Activated T-helper 2 cell treated with anti-CD3 and anti-CD28 coated beads, Interferon-gamma antibody, Interleukin-2, Interleukin-4, amounts not matched to agents 10 μg/mL and 5 μg/mL and 100 μg/mL, durations not matched to agents 14 hours and 24 hours and 36 hours (primary cell): ENCODE measurements at regions of chr2 and their contacts with region 1.

Region 1: GRCh38 chr2:32356735-32357644 is at the start of gene BIRC6:
- DNase-seq: peak; percentile 94
- H3K4me3 Mint-ChIP-seq: peak within 1 kb of the TSS; percentile 89
- H3K27ac Mint-ChIP-seq: peak within 1 kb of the TSS; percentile 92
- H3K4me1 Mint-ChIP-seq: peaks cover 34% of the 10 kb centered on the region
- H3K27me3 Mint-ChIP-seq: no peaks in the 10 kb centered on the region
- total RNA-seq, gene BIRC6: 111 and 123 TPM in 2 replicates

Region 2: GRCh38 chr2:32108111-32108510 is 248.9 kb before region 1 on chr2:
- intact Hi-C with region 1: no loop called
- DNase-seq: no peak
- H3K4me3 Mint-ChIP-seq: no peak overlapping the region
- H3K27ac Mint-ChIP-seq: no peak overlapping the region
- H3K4me1 Mint-ChIP-seq: peaks cover 5% of the 10 kb centered on the region
- H3K27me3 Mint-ChIP-seq: no peaks in the 10 kb centered on the region

Region 3: DNA sequence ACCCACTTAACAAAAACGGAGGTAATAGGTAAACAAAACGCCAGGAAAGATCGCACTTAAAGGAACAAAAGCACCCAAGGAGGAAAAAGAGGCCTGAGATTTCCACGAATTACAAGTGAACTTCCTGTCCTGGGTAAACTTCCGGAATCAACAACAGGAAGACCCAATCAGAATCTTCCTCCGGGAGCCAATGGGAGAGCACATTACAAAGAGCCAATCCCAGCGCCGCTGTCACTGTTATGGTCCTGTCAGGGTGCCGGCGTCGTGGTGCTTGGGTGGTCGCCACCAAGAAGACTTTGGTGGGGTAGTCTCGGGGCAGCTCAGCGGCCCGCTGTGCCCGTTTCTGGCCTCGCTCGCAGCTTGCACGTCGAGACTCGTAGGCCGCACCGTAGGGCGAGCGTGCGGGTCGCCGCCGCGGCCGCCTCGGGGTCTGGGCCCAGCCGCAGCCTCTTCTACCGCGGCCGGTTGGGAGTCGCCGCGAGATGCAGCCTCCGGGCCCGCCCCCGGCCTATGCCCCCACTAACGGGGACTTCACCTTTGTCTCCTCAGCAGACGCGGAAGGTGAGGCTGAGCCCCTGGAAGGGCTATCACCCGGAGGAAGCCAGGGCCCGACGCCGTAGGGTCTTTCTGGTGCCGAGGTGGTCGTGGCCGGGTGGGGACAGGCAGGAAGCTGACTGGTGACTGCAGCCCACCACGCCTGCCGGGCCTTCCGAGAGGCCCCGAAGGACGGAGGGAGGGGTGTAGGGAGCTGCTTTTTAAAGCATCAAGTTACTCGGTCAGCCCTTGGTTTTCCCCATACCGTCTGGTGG is 79.1 kb before region 1 on chr2 and contains the start of gene YIPF4:
- intact Hi-C with region 1: loop called (anchors 2 kb)
- DNase-seq: peak; percentile 85
- H3K4me3 Mint-ChIP-seq: peak within 1 kb of the TSS; percentile 97
- H3K27ac Mint-ChIP-seq: peak within 1 kb of the TSS; percentile 94
- H3K4me1 Mint-ChIP-seq: peaks cover 7% of the 10 kb centered on the region
- H3K27me3 Mint-ChIP-seq: peaks cover 2% of the 10 kb centered on the region
- total RNA-seq, gene YIPF4: 33.4 and 36.7 TPM in 2 replicates

Region 4: GRCh38 chr2:32377928-32378327 is 20.9 kb after region 1 on chr2:
- intact Hi-C with region 1: no loop called
- DNase-seq: no peak
- H3K4me3 Mint-ChIP-seq: no peak overlapping the region
- H3K27ac Mint-ChIP-seq: no peak overlapping the region
- H3K4me1 Mint-ChIP-seq: peaks cover 26% of the 10 kb centered on the region
- H3K27me3 Mint-ChIP-seq: no peaks in the 10 kb centered on the region